Heart right ventricle (tissue), 16 donors: ENCODE measurements at regions of chr2 and their contacts with region 1.

Region 1: GRCh38 chr2:37414470-37414949 is 70.1 kb downstream of the QPCT start:
- DNase-seq: no peak
- ATAC-seq: peak; percentile 65 to 91 (median 82)
- H3K4me3 ChIP-seq: peak overlapping the region in 3 of 10 donors; percentile 4 to 29 (median 8)
- H3K27ac ChIP-seq: peak overlapping the region in 6 of 10 donors; percentile 8 to 69 (median 66)
- H3K4me1 ChIP-seq: peaks cover 0 to 19% (median 14%) of the 10 kb centered on the region in 9 donors
- H3K27me3 ChIP-seq: no peaks in the 10 kb centered on the region
- CTCF ChIP-seq: peak; percentile 68 to 92 (median 80)

Region 2: DNA sequence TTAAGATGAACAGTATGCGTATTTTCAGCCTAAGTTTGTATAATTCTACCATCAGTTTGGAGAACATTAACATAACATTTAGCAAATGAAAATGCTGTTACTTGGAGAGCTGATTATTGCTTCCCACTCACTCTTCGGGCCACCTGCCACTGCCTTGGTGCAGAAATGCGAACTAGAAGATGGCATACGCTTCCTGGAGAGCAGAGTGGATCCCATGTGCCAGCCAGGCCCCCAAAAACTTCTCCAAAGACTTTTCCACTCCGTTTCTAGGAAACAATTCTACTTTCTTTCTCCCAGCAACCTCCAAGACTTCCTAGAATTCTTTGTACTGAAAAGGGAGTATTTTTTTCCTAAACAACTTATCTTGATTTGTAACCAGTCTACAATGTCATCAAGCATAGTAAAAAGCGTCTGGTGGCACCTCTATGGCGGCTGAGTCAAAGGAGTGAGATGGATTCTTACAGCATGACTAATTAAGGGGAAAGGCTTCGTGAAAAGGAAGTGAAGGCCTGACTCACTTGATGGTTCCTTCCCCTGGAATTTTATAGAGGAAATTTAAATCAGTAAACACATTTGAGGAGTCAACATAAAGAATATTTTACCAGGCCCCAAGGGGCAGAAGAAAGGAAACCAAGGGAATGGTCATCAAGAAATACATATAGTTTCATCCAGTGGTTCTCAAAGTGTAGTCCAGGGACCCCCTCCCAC is 853.1 kb before region 1 on chr2:
- intact Hi-C with region 1: no loop called
- DNase-seq: peak in 1 of 2 donors; percentile 32
- ATAC-seq: peak in 7 of 8 donors; percentile 17 to 92 (median 91)
- H3K4me3 ChIP-seq: no peak overlapping the region
- H3K27ac ChIP-seq: peak overlapping the region in 9 of 10 donors; percentile 46 to 85 (median 69)
- H3K4me1 ChIP-seq: peaks cover 0 to 44% (median 20%) of the 10 kb centered on the region in 9 donors
- H3K27me3 ChIP-seq: no peaks in the 10 kb centered on the region
- CTCF ChIP-seq: no peak

Region 3: DNA sequence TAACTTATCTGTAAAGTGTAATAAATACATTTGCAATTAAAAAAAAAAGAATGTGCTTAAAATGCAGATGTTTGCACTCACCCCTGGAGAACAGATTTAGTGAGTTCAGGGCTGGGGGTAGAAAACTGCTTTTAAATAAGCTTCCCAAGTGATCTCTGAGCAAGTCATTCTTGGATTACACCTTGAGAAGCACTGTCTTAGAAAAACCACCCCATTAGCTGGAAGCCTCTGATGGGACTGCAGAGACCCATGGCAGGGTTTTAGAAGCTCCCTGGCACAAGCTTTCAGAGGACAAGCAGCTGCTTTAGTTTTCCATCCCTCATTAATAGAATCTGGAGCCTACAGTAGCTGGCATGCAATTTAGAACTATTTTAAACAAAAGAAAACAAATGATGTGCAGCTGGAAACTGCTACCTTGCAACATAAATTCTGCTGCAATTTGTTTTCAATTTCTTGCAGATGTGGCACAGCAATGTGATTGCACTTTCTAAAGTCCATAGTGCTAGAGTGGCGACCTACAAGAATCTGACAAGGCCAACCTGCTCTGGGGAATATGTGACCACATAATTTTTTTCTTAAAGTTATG is 115.4 kb after region 1 on chr2:
- intact Hi-C with region 1: loop called in 3 of 10 experiments (anchors 5 to 10 kb)
- DNase-seq: no peak
- ATAC-seq: no peak
- H3K4me3 ChIP-seq: no peak overlapping the region
- H3K27ac ChIP-seq: no peak overlapping the region
- H3K4me1 ChIP-seq: peaks cover 0 to 16% (median 4%) of the 10 kb centered on the region in 9 donors
- H3K27me3 ChIP-seq: no peaks in the 10 kb centered on the region
- CTCF ChIP-seq: no peak

Region 4: GRCh38 chr2:37648331-37649011 is 234.0 kb after region 1 on chr2:
- intact Hi-C with region 1: loop called in 2 of 10 experiments (anchors 10 kb)
- DNase-seq: peak; percentile 49 to 74
- ATAC-seq: peak; percentile 65 to 83 (median 78)
- H3K4me3 ChIP-seq: peak overlapping the region in 2 of 10 donors; percentile 7 to 16
- H3K27ac ChIP-seq: peak overlapping the region; percentile 47 to 99 (median 84)
- H3K4me1 ChIP-seq: peaks cover 21 to 100% (median 94%) of the 10 kb centered on the region in 9 donors
- H3K27me3 ChIP-seq: no peaks in the 10 kb centered on the region
- CTCF ChIP-seq: peak; percentile 11 to 59 (median 32)

Region 5: DNA sequence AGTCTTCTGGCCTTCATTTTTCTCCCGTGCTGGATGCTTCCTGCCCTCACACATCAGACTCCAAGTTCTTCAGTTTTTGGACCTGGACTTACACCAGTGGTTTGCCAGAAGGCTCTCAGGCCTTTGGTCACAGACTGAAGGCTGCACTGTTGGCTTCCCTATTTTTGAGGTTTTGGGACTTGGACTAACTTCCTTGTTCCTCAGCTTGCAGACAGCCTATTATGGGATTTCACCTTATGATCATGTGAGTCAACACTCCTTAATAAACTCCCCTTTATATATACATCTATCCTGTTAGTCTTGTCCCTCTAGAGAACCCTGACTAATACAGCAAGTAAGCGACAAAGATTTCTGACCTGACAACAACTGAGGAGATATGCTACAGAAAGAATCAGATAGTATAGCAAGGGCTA is 249.7 kb after region 1 on chr2:
- intact Hi-C with region 1: loop called in 2 of 10 experiments (anchors 10 kb)
- DNase-seq: no peak
- ATAC-seq: peak in 1 of 8 donors; percentile 2
- H3K4me3 ChIP-seq: no peak overlapping the region
- H3K27ac ChIP-seq: peak overlapping the region in 6 of 10 donors; percentile 23 to 99 (median 77)
- H3K4me1 ChIP-seq: peaks cover 6 to 100% (median 96%) of the 10 kb centered on the region in 9 donors
- H3K27me3 ChIP-seq: no peaks in the 10 kb centered on the region
- CTCF ChIP-seq: no peak

Region 6: GRCh38 chr2:37720533-37721200 is 306.2 kb after region 1 on chr2:
- intact Hi-C with region 1: no loop called
- DNase-seq: no peak
- ATAC-seq: no peak
- H3K4me3 ChIP-seq: no peak overlapping the region
- H3K27ac ChIP-seq: no peak overlapping the region
- H3K4me1 ChIP-seq: peaks cover 0 to 16% (median 0%) of the 10 kb centered on the region in 9 donors
- H3K27me3 ChIP-seq: no peaks in the 10 kb centered on the region
- CTCF ChIP-seq: no peak

Region 7: GRCh38 chr2:37832590-37833197 is 418.2 kb after region 1 on chr2:
- intact Hi-C with region 1: loop called (anchors 1 to 5 kb)
- DNase-seq: peak; percentile 81 to 90
- ATAC-seq: peak; percentile 62 to 89 (median 82)
- H3K4me3 ChIP-seq: no peak overlapping the region
- H3K27ac ChIP-seq: peak overlapping the region in 4 of 10 donors; percentile 75 to 84 (median 81)
- H3K4me1 ChIP-seq: peaks cover 0 to 51% (median 38%) of the 10 kb centered on the region in 9 donors
- H3K27me3 ChIP-seq: no peaks in the 10 kb centered on the region
- CTCF ChIP-seq: peak; percentile 49 to 86 (median 80)